B cell (primary cell): ENCODE measurements at regions of chr9 and their contacts with region 1.

Region 1: DNA sequence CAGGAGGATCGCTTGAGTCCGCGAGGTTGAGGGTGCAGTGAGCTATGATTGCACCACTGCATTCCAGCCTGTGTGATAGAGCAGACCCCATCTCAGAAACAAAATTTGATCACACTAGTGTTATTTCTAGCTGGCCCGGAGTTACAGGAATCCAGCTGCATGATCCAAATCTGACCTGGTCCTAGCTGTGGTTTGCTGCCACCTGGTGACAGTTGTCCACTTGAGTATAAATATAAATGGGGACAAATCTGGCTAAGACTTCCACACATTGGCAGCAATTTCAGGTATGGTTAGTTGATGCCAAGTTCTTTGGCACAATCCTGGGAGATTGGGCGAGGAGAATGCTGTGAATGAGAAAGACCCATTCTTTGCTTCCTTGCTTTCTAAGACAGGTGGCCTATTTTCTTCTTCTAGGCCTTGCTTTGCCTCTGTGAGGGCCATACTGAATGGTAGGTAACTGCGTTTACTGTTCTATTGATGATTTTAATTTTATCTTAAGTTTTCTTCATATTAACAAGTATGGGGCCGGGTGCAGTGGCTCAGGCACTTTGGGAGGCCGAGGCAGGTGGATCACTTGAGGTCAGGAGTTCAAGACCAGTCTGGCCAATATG is 35.4 kb downstream of the UBE2R2 start:
- DNase-seq: peak; percentile 77
- ATAC-seq: peak; percentile 83
- H3K4me3 ChIP-seq: no peak overlapping the region
- H3K4me3 Mint-ChIP-seq: no peak overlapping the region
- H3K27ac ChIP-seq: peak overlapping the region in 1 of 2 donors; percentile 37
- H3K27ac Mint-ChIP-seq: no peak overlapping the region
- H3K4me1 ChIP-seq: peaks cover 12 to 19% of the 10 kb centered on the region in 2 donors
- H3K4me1 Mint-ChIP-seq: peaks cover 39% of the 10 kb centered on the region
- H3K27me3 ChIP-seq: no peaks in the 10 kb centered on the region
- H3K27me3 Mint-ChIP-seq: no peaks in the 10 kb centered on the region
- CTCF ChIP-seq: peak; percentile 64

Region 2: GRCh38 chr9:33721674-33722358 is 130.5 kb before region 1 on chr9:
- CTCF ChIA-PET with region 1: interaction called, 10 read pairs
- POLR2A ChIA-PET with region 1: no interaction called
- intact Hi-C with region 1: no loop called
- DNase-seq: peak; percentile 86
- ATAC-seq: peak; percentile 82
- H3K4me3 ChIP-seq: no peak overlapping the region
- H3K4me3 Mint-ChIP-seq: no peak overlapping the region
- H3K27ac ChIP-seq: no peak overlapping the region
- H3K27ac Mint-ChIP-seq: no peak overlapping the region
- H3K4me1 ChIP-seq: peaks cover 0 to 10% of the 10 kb centered on the region in 2 donors
- H3K4me1 Mint-ChIP-seq: peaks cover 3% of the 10 kb centered on the region
- H3K27me3 ChIP-seq: peaks cover 0 to 7% (median 0%) of the 10 kb centered on the region in 4 experiments
- H3K27me3 Mint-ChIP-seq: peaks cover 27% of the 10 kb centered on the region
- CTCF ChIP-seq: peak; percentile 100

Region 3: DNA sequence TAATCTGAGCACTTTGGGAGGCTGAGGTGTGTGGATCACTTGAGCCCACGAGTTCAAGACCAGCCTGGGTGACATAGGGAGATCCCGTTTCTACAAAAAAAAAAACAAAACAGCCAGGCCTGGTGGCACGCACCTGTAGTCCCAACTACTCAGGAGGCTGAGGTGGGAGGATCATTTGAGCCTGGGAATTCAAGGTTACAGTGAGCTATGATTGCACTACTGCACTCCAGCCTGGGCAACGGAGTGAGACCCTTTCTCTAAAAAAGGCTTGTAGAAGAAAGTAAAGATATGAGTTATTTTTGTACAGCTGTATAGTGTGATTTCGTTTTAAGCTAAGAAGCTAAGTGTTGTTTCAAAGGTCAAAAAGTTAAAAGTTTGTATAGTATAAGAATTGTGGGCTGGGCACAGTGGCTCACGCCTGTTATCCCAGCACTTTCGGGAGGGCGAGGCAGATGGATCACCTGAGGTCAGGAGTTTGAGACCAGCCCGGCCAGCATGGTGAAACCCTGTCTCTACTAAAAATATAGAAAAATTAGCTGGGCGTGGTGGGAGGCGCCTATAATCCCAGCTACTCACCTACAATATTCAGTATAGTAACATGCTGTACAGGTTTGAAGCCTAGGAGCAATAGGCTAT is 16.6 kb before region 1 on chr9:
- CTCF ChIA-PET with region 1: interaction called, 12 read pairs
- POLR2A ChIA-PET with region 1: no interaction called
- intact Hi-C with region 1: no loop called
- DNase-seq: no peak
- ATAC-seq: no peak
- H3K4me3 ChIP-seq: no peak overlapping the region
- H3K4me3 Mint-ChIP-seq: no peak overlapping the region
- H3K27ac ChIP-seq: no peak overlapping the region
- H3K27ac Mint-ChIP-seq: no peak overlapping the region
- H3K4me1 ChIP-seq: peaks cover 16 to 19% of the 10 kb centered on the region in 2 donors
- H3K4me1 Mint-ChIP-seq: peaks cover 46% of the 10 kb centered on the region
- H3K27me3 ChIP-seq: no peaks in the 10 kb centered on the region
- H3K27me3 Mint-ChIP-seq: no peaks in the 10 kb centered on the region
- CTCF ChIP-seq: no peak

Region 4: DNA sequence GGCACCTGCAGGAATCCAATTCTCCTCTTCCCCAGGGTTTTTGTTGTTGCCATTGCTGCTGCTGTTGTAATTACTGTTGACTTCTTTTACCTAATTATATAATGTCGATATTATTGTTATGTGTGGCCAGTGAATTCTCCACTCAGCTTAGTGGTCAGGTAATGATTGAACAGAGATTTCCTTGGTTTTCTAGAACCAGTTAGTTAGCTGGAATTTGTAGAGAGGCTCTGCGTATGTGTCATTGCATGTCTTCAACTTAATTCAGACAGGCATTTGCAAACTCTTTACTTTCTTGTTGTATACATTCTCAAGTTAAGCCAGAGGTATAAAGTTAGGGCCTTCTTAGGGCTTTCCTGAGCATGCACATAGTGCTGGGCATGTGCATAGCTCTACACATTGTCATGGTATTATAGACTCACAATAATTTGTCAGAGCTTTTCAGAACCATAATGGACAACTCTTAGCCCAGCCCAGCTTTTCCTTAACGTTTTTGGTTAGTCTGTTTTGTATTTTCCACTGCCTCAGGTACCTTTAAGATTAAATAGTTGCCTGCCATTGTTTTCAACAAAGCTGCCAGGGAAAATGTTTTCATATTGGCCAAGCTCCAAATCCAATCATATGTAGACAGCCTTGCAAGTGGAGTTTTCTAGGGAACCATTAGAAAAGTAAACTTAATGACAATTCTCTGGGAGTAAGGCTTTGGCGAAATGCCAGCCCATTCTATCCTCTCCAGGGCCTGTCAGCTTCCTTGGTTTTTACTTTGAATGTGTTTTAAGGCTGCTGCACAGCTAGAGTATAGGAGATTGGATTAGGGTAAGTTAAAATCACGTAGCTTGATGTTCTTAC is 32.8 kb after region 1 on chr9:
- CTCF ChIA-PET with region 1: no interaction called
- POLR2A ChIA-PET with region 1: no interaction called
- intact Hi-C with region 1: no loop called
- DNase-seq: no peak
- ATAC-seq: no peak
- H3K4me3 ChIP-seq: no peak overlapping the region
- H3K4me3 Mint-ChIP-seq: no peak overlapping the region
- H3K27ac ChIP-seq: no peak overlapping the region
- H3K27ac Mint-ChIP-seq: no peak overlapping the region
- H3K4me1 ChIP-seq: no peaks in the 10 kb centered on the region
- H3K4me1 Mint-ChIP-seq: peaks cover 28% of the 10 kb centered on the region
- H3K27me3 ChIP-seq: no peaks in the 10 kb centered on the region
- H3K27me3 Mint-ChIP-seq: no peaks in the 10 kb centered on the region
- CTCF ChIP-seq: no peak